ENCODE measurements at regions of chr15 and their contacts with region 1.

Region 1: GRCh38 chr15:74322181-74323076 is 45.0 kb downstream of the CYP11A1 start:
- DNase-seq: peak; percentile 75 to 87 (median 83)
- H3K4me3 ChIP-seq: no peak overlapping the region
- H3K27ac ChIP-seq: no peak overlapping the region
- H3K4me1 ChIP-seq: peaks cover 25% of the 10 kb centered on the region
- H3K27me3 ChIP-seq: no peaks in the 10 kb centered on the region
- CTCF ChIP-seq: peak; percentile 69 to 90 (median 89)
- EP300 ChIP-seq: no peak
- POLR2A ChIP-seq: peak; percentile 5

Region 2: DNA sequence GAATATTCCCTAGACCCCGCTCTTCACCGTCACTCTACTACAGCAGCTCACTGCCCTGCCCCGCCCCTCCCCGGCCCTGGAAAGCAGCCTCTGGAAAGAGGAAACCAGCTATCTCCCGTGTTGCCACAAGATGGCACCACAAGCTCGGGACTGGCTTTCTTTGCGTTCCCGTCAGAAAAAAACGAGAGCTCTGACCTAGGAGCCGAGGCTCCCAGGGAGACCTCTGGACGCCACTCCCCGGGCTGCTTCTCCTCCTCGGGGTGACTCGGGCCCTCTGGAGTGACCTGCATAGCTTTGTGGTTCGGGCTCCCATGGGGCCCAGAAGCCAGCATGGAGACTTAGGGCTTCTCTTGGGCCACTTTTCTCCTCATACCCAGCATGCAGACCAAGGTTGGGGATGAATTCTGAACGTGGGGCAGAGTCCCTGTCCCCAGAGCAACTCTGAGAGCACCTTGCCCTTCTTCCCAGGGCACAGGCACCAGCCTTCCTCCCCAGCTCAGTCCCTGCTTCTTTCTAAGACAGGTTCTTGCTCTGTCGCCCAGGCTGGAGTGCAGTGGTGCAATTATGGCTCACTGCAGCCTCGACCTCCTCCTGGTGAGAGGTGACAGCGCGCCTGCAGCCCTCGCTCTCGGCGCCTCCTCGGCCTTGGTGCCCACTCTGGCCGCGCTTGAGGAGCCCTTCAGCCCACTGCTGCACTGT is 349.3 kb before region 1 on chr15:
- intact Hi-C with region 1: loop called in 3 of 4 experiments (anchors 5 to 10 kb)
- DNase-seq: peak; percentile 78 to 90 (median 86)
- H3K4me3 ChIP-seq: no peak overlapping the region
- H3K27ac ChIP-seq: no peak overlapping the region
- H3K4me1 ChIP-seq: no peaks in the 10 kb centered on the region
- H3K27me3 ChIP-seq: no peaks in the 10 kb centered on the region
- CTCF ChIP-seq: peak; percentile 57 to 88 (median 83)
- EP300 ChIP-seq: no peak
- POLR2A ChIP-seq: no peak

Region 3: GRCh38 chr15:74044267-74045110 is 277.9 kb before region 1 on chr15:
- intact Hi-C with region 1: loop called in 1 of 4 experiments (anchors 5 kb)
- DNase-seq: peak in 4 of 5 donors; percentile 48 to 68 (median 54)
- H3K4me3 ChIP-seq: no peak overlapping the region
- H3K27ac ChIP-seq: peak overlapping the region in 1 of 2 donors; percentile 45
- H3K4me1 ChIP-seq: peaks cover 10% of the 10 kb centered on the region
- H3K27me3 ChIP-seq: no peaks in the 10 kb centered on the region
- CTCF ChIP-seq: no peak
- EP300 ChIP-seq: no peak
- POLR2A ChIP-seq: no peak

Region 4: DNA sequence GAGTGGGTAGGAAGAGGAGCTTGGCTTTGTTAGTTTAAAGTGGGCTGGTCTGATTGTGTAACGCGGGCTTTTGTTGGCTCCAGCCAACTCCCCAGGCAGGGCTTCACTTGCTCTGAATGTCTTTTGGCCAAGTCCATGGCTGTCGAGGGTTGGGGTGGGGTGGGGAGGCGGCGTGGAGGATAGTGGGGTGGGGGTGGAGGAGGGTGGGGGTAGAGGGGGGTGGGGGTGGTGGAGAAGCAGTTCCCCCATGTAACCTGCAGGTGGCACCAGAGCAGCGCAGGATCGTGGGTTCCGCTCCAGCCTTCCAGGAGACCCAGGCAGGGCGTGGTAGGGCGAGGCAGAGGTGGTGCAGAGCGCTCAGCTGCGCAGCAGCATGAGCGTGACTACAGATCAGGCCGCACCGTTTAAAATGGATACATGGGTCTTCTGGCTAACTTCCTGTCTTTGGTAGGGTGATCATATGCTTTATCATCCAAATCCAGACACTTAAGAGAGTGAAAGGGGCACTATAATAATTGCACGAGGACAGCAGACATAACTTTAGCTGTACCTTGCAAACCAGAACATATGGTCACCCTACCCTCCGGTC is 268.4 kb before region 1 on chr15:
- intact Hi-C with region 1: loop called in 2 of 4 experiments (anchors 5 kb)
- DNase-seq: peak; percentile 78 to 85 (median 81)
- H3K4me3 ChIP-seq: no peak overlapping the region
- H3K27ac ChIP-seq: no peak overlapping the region
- H3K4me1 ChIP-seq: peaks cover 17% of the 10 kb centered on the region
- H3K27me3 ChIP-seq: no peaks in the 10 kb centered on the region
- CTCF ChIP-seq: peak in 2 of 3 donors; percentile 18 to 39
- EP300 ChIP-seq: no peak
- POLR2A ChIP-seq: no peak

Region 5: GRCh38 chr15:74127260-74127953 is 195.0 kb before region 1 on chr15:
- intact Hi-C with region 1: loop called in 2 of 4 experiments (anchors 2 to 5 kb)
- DNase-seq: peak; percentile 84 to 94 (median 92)
- H3K4me3 ChIP-seq: peak overlapping the region; percentile 26
- H3K27ac ChIP-seq: no peak overlapping the region
- H3K4me1 ChIP-seq: peaks cover 8% of the 10 kb centered on the region
- H3K27me3 ChIP-seq: no peaks in the 10 kb centered on the region
- CTCF ChIP-seq: peak; percentile 93 to 99 (median 99)
- EP300 ChIP-seq: no peak
- POLR2A ChIP-seq: no peak

Region 6: GRCh38 chr15:74384854-74385643 is 62.6 kb after region 1 on chr15:
- intact Hi-C with region 1: no loop called
- DNase-seq: no peak
- H3K4me3 ChIP-seq: no peak overlapping the region
- H3K27ac ChIP-seq: no peak overlapping the region
- H3K4me1 ChIP-seq: no peaks in the 10 kb centered on the region
- H3K27me3 ChIP-seq: no peaks in the 10 kb centered on the region
- CTCF ChIP-seq: no peak
- EP300 ChIP-seq: no peak
- POLR2A ChIP-seq: no peak